ENCODE measurements at regions of chr6 and their contacts with region 1.

Region 1: DNA sequence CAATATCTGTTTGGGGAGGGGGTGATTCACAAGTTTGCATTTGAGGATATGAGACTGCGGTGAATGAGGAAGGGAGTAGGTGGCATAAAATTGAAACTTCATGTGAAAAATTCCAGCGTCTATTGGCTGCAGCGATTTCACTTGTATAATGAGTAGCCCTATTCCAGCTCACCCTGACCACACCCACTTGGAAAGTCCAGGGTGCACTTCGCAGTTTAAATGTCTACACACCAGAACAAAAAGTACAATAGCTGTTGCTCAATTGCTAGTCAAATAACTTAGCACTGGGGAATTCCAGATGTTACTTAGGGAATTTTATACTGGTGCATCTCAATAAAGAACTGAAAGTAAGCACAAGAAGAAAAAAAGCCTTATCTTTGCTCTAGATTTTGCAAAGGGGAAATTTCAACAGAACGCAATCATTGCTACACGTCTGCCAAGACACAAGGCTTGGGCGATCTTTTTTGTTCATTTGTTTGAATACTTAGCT is 6.3 kb downstream of the TNFAIP3 start:
- DNase-seq: peak; percentile 93
- ATAC-seq: peak; percentile 56
- H3K4me3 Mint-ChIP-seq: peak overlapping the region; percentile 91
- H3K27ac Mint-ChIP-seq: peak overlapping the region; percentile 99
- H3K4me1 Mint-ChIP-seq: peaks cover 40% of the 10 kb centered on the region
- H3K27me3 Mint-ChIP-seq: no peaks in the 10 kb centered on the region

Region 2: DNA sequence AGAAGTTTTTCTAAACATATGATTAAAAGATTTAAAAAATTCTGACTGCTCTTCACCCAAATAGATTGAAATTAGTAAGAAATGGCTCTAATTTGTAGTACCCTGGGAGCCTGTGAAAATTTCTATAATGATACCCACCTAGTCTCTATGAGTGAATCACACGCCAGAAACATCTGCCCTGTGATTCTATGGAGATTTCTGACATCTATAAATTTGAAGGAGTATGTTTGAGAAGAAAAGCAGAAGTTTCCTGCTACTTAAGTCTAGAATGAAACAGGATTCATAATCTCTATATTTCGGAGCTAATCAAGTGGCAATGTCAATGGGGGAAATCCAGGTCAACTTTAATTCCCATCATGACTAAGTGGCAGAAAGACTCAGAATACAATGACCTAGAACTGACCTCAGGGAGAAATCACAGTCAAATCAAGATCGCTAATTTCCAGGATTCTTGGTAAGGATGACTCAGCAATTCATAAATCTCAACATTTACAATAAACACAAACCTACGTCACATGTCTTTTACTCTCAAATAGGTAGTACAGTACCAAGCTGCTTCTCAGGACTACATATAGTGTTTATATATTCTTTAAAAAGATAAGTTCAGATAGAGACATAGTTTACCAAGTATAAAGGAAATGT is 192.5 kb before region 1 on chr6:
- CTCF ChIA-PET with region 1: interaction called, 6 read pairs
- POLR2A ChIA-PET with region 1: interaction called, 5 read pairs
- intact Hi-C with region 1: loop called (anchors 1 kb)
- DNase-seq: no peak
- ATAC-seq: peak; percentile 62
- H3K4me3 Mint-ChIP-seq: peak overlapping the region; percentile 2
- H3K27ac Mint-ChIP-seq: peak overlapping the region; percentile 67
- H3K4me1 Mint-ChIP-seq: peaks cover 53% of the 10 kb centered on the region
- H3K27me3 Mint-ChIP-seq: peaks cover 12% of the 10 kb centered on the region

Region 3: DNA sequence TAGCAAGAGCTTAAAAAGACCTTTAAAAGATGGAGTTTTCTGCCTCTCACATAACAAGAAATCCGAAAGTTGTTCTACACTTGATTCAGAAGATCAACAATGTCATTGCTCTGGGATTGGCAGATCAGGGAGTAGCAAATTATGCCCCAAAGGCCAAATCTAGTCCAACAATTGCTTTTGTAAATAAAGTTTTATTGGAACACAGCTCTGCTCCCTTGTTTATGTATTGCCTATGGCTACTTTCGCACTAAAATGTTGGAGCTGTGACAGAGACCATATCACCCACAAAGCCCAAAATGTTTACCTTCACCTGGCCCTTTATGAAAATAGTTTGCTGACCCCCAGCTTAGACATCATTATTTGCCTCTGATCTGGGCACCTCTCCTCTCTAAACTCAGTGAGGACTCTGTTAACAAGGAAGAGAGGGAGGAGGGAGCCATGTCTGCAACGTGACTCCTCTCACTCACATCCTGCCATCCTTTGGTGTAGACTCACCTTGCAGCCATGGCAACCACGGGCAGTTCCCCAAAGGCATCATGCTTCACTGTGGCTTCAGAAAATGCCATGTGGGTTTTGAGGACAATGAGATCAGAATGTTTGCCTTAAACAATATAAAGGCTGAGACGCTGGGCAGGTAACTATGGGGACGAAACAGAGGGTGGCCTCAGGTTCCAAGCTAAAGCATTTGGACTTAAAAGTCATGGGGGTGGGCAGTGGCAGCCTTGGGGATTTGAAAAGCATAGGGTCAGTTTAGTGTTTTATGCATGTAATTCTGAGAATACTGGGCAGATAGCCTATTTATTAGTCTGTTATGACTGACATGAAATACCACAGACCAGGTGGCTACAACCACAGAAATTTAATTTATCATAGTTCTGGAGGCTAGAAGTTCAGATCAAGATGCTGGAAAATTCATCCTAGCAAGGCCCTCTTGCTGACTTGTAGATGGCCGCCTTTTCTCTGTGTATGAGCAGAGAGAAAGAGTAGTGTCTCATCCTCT is 155.9 kb before region 1 on chr6:
- CTCF ChIA-PET with region 1: interaction called, 17 read pairs
- POLR2A ChIA-PET with region 1: interaction called, 10 read pairs
- intact Hi-C with region 1: no loop called
- DNase-seq: peak; percentile 88
- ATAC-seq: peak; percentile 82
- H3K4me3 Mint-ChIP-seq: peak overlapping the region; percentile 0
- H3K27ac Mint-ChIP-seq: peak overlapping the region; percentile 73
- H3K4me1 Mint-ChIP-seq: peaks cover 45% of the 10 kb centered on the region
- H3K27me3 Mint-ChIP-seq: no peaks in the 10 kb centered on the region

Region 4: GRCh38 chr6:137832110-137832509 is 41.2 kb before region 1 on chr6:
- CTCF ChIA-PET with region 1: interaction called, 5 read pairs
- POLR2A ChIA-PET with region 1: interaction called, 11 read pairs
- intact Hi-C with region 1: no loop called
- DNase-seq: no peak
- ATAC-seq: no peak
- H3K4me3 Mint-ChIP-seq: no peak overlapping the region
- H3K27ac Mint-ChIP-seq: peak overlapping the region; percentile 32
- H3K4me1 Mint-ChIP-seq: peaks cover 58% of the 10 kb centered on the region
- H3K27me3 Mint-ChIP-seq: no peaks in the 10 kb centered on the region

Region 5: GRCh38 chr6:137933696-137934095 is 60.4 kb after region 1 on chr6:
- CTCF ChIA-PET with region 1: interaction called, 47 read pairs
- POLR2A ChIA-PET with region 1: no interaction called
- intact Hi-C with region 1: no loop called
- DNase-seq: no peak
- ATAC-seq: peak; percentile 33
- H3K4me3 Mint-ChIP-seq: no peak overlapping the region
- H3K27ac Mint-ChIP-seq: peak overlapping the region; percentile 53
- H3K4me1 Mint-ChIP-seq: peaks cover 35% of the 10 kb centered on the region
- H3K27me3 Mint-ChIP-seq: no peaks in the 10 kb centered on the region

Region 6: DNA sequence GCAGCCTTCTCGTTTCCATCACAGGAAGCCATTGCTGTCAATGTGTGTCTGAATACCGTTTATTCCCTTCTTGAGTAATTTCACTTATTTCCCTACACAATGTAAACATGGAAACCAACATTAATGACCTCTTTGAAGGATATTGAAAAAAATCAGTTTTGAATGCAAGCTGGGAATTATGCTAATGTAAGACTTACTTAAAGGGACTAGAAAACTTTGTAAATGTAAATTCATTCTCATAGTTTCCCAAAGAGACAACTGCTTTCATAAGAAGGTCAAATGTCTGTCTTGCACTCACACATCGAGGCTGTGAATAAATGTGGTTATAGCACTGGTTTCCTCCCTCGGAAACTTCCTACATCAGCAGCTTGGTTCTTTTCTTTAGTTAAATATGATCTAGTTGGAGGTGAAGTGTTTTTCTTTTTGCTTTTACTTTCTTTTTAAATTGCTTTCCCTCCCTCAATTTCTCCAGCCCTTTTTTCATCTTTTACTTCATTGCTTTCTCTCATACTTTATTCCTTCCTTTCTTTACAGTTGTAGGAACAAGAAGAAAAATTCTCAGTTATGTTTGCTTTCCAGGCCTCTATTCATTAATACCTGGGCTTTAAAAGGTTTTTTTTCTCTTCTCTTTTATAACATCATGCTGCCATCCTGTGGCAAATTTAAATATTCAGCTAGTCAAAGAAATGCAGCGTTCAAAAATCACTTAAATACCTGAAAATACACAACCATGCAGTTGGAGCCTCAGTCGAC is 102.0 kb after region 1 on chr6:
- CTCF ChIA-PET with region 1: interaction called, 40 read pairs
- POLR2A ChIA-PET with region 1: interaction called, 10 read pairs
- intact Hi-C with region 1: loop called (anchors 1 kb)
- DNase-seq: peak; percentile 51
- ATAC-seq: peak; percentile 60
- H3K4me3 Mint-ChIP-seq: peak overlapping the region; percentile 55
- H3K27ac Mint-ChIP-seq: peak overlapping the region; percentile 90
- H3K4me1 Mint-ChIP-seq: peaks cover 72% of the 10 kb centered on the region
- H3K27me3 Mint-ChIP-seq: no peaks in the 10 kb centered on the region

Region 7: GRCh38 chr6:138052757-138053156 is 179.4 kb after region 1 on chr6:
- CTCF ChIA-PET with region 1: no interaction called
- POLR2A ChIA-PET with region 1: no interaction called
- intact Hi-C with region 1: no loop called
- DNase-seq: no peak
- ATAC-seq: no peak
- H3K4me3 Mint-ChIP-seq: no peak overlapping the region
- H3K27ac Mint-ChIP-seq: no peak overlapping the region
- H3K4me1 Mint-ChIP-seq: no peaks in the 10 kb centered on the region
- H3K27me3 Mint-ChIP-seq: peaks cover 34% of the 10 kb centered on the region